RWPE1 (cell line): ENCODE measurements at regions of chr6 and their contacts with region 1.

Region 1: DNA sequence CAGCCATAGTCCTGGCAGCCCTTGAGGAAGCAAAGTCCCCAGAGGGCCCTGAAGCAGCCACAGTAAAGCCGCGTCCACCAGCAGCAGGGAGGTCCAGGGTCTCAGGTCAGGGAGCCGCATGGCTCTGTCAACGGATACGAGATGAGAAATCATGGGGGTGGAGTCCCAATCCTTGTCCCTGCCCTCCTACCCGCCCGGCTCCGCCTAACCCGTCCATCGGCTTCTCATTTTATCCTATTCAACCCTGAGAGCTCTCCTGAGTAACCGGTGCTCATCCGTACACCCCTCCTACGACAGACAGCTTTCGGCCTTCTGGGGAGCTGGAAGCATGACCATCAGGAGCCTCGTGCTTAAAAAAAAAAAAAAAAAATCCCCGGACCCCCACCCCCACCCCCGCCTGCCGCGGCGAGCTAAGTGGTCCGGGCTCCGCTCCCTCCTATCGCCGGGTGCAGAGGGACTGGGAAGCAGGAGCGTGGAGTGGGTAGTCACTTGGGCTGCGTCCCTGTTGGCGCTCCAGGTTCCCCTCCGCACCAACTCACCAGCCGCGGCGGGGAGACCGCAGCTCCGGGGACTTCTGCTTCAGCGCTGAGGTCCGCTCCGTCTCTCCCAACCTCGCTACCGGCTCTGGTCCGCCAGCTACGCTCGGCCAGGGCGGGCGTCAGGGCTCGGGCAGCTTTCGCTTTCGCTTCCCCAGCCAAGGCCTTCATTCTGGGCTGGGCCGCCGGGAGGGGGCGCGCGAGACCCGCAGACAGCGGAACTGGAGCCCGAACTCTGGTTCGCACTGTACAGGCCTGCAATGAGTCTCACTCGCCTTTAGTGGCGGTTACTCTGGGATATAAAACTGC is at the start of gene TAP2:
- DNase-seq: peak; percentile 95
- H3K27ac ChIP-seq: peak within 1 kb of the TSS; percentile 85
- CTCF ChIP-seq: peak; percentile 94

Region 2: DNA sequence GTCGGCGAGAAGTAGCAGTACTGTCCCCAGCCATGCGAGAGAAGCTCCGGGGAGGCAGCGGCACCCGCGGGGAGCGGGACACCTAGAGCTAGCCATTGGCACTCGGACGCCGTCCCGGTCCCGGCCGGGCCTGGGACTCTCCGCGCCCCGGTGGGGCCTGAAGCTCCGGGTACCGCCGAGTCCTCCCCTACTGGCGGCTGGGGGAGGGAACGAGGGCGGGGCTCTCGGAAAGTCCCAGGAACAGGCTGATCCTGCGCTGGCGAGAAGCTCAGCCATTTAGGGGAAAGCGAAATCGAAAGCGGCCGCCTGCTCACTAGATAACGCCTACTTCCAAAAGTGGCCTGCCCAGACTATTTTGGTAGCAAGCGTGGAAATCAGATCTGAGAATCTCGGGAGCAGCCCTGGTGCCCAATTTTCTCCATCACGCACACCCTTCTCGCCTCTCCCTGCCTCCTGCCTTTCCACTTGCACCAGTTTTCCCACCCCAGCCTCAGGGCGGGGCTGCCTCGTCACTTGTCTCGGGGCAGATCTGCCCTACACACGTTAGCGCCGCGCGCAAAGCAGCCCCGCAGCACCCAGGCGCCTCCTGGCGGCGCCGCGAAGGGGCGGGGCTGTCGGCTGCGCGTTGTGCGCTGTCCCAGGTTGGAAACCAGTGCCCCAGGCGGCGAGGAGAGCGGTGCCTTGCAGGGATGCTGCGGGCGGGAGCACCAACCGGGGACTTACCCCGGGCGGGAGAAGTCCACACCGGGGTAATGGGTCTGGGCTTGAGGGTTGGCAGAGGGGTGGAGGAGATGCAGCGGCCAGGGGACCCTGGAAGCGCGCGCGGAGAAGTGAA is 15.4 kb after region 1 on chr6 and contains the starts of genes PSMB9 and TAP1:
- CTCF ChIA-PET with region 1: interaction called, 55 read pairs
- POLR2A ChIA-PET with region 1: interaction called, 10 read pairs
- DNase-seq: peak; percentile 93
- H3K27ac ChIP-seq: peak within 1 kb of the TSS; percentile 96
- CTCF ChIP-seq: peak; percentile 86

Region 3: GRCh38 chr6:32952817-32953739 is 114.7 kb after region 1 on chr6 and contains the start of gene HLA-DMA:
- CTCF ChIA-PET with region 1: interaction called, 11 read pairs
- POLR2A ChIA-PET with region 1: no interaction called
- DNase-seq: peak; percentile 82
- H3K27ac ChIP-seq: no peak within 1 kb of the TSS
- CTCF ChIP-seq: 0 out of 2 replicates have a peak, but pooled peaks have one; percentile 15